Head of caudate nucleus (tissue), 42 donors: ENCODE measurements at regions of chr5 and their contacts with region 1.

Region 1: GRCh38 chr5:61412361-61412760 is 80.3 kb downstream of the ZSWIM6 start:
- DNase-seq: no peak

Region 2: DNA sequence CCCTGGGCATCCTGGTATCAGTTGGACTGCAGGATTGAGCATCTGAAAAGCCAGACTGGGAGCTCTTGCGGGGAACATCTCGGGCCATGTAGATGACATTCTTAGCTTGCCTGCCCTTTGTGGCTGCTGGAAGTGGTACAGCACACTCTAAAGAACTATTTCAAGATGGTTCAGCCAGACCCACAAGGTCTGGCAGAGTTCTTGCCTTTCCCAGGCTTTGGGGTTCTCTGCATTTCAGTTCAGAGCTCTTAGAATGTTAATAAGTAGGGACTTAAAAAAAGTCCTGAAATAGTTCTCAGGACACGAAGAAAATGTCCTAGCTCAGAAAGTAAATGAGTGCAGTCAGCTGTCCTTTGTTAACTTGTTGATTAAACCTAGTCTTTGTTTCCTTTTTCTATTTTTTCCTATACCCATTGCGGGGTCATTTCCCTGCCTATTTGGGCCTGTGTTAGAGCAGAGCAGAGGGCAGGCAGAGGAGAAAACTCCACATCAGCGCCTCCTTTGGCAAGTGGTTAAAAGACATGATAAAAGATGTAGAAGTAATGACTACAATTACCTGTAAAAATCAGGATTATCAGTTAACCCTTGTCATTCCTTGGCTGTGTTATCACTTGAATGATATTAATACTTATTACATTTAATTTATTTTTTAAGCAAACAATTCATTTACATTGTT is 211.2 kb after region 1 on chr5:
- intact Hi-C with region 1: loop called (anchors 5 kb)
- DNase-seq: peak in 12 of 42 donors; percentile 42 to 78 (median 54)

Region 3: GRCh38 chr5:61734966-61735365 is 322.6 kb after region 1 on chr5:
- intact Hi-C with region 1: no loop called
- DNase-seq: no peak